Naive thymus-derived CD4-positive, alpha-beta T cell (primary cell): ENCODE measurements at regions of chr17 and their contacts with region 1.

Region 1: GRCh38 chr17:64496786-64497564 is at the start of gene POLG2:
- DNase-seq: peak; percentile 93 to 96 (median 95)
- ATAC-seq: peak; percentile 89
- H3K4me3 ChIP-seq: peak within 1 kb of the TSS; percentile 69
- H3K4me3 Mint-ChIP-seq: peak within 1 kb of the TSS; percentile 96 to 100 (median 99)
- H3K27ac ChIP-seq: peak within 1 kb of the TSS; percentile 83
- H3K27ac Mint-ChIP-seq: peak within 1 kb of the TSS; percentile 91 to 100 (median 97)
- H3K4me1 ChIP-seq: peaks cover 23 to 31% of the 10 kb centered on the region in 2 donors
- H3K4me1 Mint-ChIP-seq: peaks cover 44 to 88% (median 76%) of the 10 kb centered on the region in 7 donors
- H3K27me3 ChIP-seq: no peaks in the 10 kb centered on the region
- H3K27me3 Mint-ChIP-seq: no peaks in the 10 kb centered on the region
- total RNA-seq, gene POLG2: 34.5 to 69.6 (median 41.9) TPM

Region 2: DNA sequence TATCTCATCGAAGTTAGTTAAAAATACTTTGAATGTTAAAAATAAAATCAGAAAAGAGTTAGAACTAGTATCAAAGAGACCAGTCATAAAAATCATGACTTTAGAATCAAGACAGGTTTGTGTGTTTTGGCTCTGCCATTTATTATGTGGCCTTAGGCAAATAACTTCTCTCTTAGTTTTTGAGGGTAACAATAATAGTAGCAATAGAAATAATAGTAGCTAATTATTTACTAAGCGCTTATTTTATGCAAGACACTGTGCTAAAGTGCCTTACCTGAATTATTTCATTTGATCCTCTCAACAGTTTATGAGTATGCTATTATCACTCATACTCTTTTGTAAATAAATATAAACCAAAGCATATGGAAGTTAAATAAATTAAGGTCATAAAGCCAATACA is 88.2 kb after region 1 on chr17:
- CTCF ChIA-PET with region 1: no interaction called
- POLR2A ChIA-PET with region 1: no interaction called
- intact Hi-C with region 1: no loop called
- DNase-seq: no peak
- ATAC-seq: no peak
- H3K4me3 ChIP-seq: no peak overlapping the region
- H3K4me3 Mint-ChIP-seq: no peak overlapping the region
- H3K27ac ChIP-seq: no peak overlapping the region
- H3K27ac Mint-ChIP-seq: no peak overlapping the region
- H3K4me1 ChIP-seq: no peaks in the 10 kb centered on the region
- H3K4me1 Mint-ChIP-seq: peaks cover 0 to 9% (median 5%) of the 10 kb centered on the region in 7 donors
- H3K27me3 ChIP-seq: no peaks in the 10 kb centered on the region
- H3K27me3 Mint-ChIP-seq: no peaks in the 10 kb centered on the region

Region 3: GRCh38 chr17:64653325-64653984 is 156.5 kb after region 1 on chr17:
- CTCF ChIA-PET with region 1: no interaction called
- POLR2A ChIA-PET with region 1: no interaction called
- intact Hi-C with region 1: loop called (anchors 1 to 2 kb)
- DNase-seq: no peak
- ATAC-seq: no peak
- H3K4me3 ChIP-seq: no peak overlapping the region
- H3K4me3 Mint-ChIP-seq: peak overlapping the region in 1 of 10 donors; percentile 0
- H3K27ac ChIP-seq: no peak overlapping the region
- H3K27ac Mint-ChIP-seq: peak overlapping the region in 4 of 9 donors; percentile 8 to 65 (median 36)
- H3K4me1 ChIP-seq: peaks cover 6 to 8% of the 10 kb centered on the region in 2 donors
- H3K4me1 Mint-ChIP-seq: peaks cover 27 to 73% (median 53%) of the 10 kb centered on the region in 7 donors
- H3K27me3 ChIP-seq: no peaks in the 10 kb centered on the region
- H3K27me3 Mint-ChIP-seq: no peaks in the 10 kb centered on the region